BJ (cell line): ENCODE measurements at regions of chr2 and their contacts with region 1.

Region 1: DNA sequence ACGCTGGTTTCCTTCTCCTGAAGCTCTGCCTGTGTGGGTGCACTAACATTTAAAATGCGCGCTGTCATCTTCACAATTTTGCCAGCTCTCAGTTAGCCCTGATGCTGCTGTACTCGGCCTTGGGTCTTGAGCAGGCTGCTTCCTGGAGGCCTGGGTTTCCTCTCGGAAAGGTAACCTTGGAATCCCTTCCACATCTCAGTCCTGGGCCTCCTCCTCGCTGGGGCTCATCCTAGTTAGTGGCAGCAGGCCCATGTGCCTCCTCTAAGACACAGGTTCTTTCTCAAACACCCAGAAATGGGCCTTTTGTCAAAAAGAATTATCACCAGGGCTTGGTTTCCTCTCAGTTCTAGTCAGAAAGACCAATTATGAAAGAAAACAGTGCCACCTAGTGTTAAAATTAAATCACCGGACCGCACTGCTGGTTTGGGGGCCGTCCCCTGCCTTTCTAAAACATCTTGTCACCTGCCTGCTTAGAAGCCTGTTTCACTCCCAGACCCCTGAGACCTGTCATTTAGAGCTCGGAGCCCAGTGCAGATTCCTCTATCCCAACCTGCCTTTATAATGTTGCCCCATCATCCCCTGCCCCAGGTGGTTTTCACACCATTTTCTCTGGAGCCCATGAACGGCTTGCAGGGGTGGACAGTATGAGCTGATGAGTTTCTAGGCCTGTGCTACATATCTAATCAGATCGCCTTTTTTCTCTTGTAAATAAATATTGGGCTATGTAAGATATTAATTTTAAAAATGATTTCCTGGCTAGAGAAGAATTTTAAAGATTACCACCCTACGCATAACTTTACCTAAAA is 42.4 kb downstream of the HK2 start:
- DNase-seq: no peak
- H3K4me3 ChIP-seq: no peak overlapping the region
- H3K27me3 ChIP-seq: no peaks in the 10 kb centered on the region
- CTCF ChIP-seq: peak; percentile 58

Region 2: DNA sequence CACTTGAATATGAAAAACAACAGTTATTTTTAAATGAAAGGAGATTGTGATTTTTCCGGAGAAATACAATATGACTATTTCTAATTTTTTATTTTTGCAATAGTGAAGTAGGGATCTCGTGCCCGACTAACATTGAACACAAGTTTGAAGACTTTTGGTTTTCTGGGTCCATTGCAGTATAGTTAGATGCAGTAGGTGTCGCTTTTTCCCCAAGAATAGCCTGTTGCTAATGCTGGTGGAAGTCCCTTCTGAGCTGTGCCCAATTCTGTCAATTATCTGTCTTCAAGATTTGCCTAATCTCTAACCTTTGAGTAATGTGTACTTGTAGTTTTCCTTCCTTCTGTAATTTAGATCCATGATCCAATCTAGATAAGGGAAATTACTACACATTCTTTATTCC is 185.7 kb before region 1 on chr2:
- CTCF ChIA-PET with region 1: interaction called, 57 read pairs
- POLR2A ChIA-PET with region 1: no interaction called
- DNase-seq: peak; percentile 13
- H3K4me3 ChIP-seq: no peak overlapping the region
- H3K27me3 ChIP-seq: peaks cover 4% of the 10 kb centered on the region
- CTCF ChIP-seq: peak; percentile 77

Region 3: DNA sequence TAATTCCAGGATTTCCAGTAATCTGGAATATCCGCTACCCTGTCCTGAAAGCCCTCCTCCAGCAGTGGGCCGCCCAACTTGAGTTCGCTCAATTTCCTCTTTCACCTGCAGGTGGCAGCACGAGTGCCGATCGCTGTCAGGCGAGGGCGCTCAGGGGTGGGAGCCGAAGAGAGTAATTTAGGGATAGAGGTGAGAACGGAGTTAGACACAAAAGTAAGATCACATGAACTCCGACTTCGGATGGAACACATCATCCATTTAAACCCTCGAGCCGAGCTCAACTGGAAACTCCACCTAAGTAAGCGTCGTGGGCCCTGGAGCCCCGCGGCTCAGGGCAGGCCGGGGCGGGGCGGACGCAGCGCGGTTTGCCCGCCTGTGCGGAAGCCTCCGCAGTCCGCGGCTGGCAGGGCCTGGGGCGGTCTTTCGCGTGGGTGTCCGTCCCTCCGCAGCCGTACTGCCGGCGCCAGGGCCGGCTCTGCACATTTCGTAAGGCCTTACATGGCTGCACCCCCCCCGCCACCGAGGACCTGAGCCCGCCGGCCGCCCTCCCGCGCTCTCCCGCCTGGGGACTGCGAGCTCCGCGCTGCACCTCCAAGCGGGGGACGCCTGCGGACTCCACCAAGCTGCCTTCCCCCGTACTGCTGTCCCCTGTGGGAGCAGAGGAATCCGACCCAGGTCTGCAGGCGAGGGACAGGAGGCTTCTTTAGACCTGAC is 161.0 kb before region 1 on chr2:
- CTCF ChIA-PET with region 1: interaction called, 75 read pairs
- POLR2A ChIA-PET with region 1: interaction called, 4 read pairs
- DNase-seq: no peak
- H3K4me3 ChIP-seq: peak overlapping the region; percentile 51
- H3K27me3 ChIP-seq: no peaks in the 10 kb centered on the region
- CTCF ChIP-seq: peak; percentile 88

Region 4: DNA sequence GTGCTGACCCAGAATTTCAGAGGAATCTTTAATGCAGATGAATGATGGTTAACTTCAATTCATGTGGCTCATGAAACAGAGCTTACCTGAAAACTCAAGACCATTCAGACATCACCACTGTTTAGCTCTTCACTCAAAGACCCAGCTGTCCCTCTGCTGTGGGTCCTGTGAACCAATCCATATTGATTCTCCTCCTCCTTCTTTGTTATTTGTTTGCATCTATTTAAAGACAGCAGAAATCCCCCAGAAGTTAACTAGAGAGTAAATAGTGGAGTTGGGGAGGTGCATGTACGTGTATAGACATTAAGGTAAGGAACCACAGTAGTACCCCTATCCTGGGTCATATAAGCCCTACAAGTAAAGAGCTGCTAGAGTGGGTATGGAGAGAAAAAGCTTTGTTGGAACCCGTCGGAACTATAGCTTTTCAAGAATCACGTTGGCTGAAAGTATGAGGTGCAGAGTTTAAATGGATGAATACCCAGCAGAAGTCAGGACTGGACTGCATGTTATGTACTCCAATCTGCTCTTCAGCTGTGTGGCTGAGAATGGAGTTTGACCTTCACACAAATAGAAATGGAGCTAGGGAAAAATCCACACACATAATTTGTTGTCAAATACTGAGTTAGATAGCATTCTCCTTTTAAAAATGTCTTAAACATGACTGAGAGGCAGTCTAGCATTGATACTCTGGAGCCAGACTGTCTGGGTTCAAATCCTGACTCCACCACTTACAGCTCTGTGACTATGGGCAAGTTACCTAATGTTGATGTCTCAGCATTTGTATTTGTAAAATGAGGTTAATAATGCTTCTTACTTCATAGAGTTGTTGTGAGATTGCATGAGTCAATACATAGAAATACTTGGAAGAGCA is 124.1 kb before region 1 on chr2:
- CTCF ChIA-PET with region 1: interaction called, 10 read pairs
- POLR2A ChIA-PET with region 1: no interaction called
- DNase-seq: no peak
- H3K4me3 ChIP-seq: no peak overlapping the region
- H3K27me3 ChIP-seq: no peaks in the 10 kb centered on the region; the same call in 1 of the 2 replicates
- CTCF ChIP-seq: no peak

Region 5: GRCh38 chr2:74887445-74887951 is 11.2 kb after region 1 on chr2:
- CTCF ChIA-PET with region 1: interaction called, 20 read pairs
- POLR2A ChIA-PET with region 1: no interaction called
- DNase-seq: peak; percentile 68
- H3K4me3 ChIP-seq: no peak overlapping the region
- H3K27me3 ChIP-seq: no peaks in the 10 kb centered on the region
- CTCF ChIP-seq: no peak